Activated B cell treated with CpG ODN at 0.5 μM for 24 hours (primary cell): ENCODE measurements at regions of chr5 and their contacts with region 1.

Region 1: DNA sequence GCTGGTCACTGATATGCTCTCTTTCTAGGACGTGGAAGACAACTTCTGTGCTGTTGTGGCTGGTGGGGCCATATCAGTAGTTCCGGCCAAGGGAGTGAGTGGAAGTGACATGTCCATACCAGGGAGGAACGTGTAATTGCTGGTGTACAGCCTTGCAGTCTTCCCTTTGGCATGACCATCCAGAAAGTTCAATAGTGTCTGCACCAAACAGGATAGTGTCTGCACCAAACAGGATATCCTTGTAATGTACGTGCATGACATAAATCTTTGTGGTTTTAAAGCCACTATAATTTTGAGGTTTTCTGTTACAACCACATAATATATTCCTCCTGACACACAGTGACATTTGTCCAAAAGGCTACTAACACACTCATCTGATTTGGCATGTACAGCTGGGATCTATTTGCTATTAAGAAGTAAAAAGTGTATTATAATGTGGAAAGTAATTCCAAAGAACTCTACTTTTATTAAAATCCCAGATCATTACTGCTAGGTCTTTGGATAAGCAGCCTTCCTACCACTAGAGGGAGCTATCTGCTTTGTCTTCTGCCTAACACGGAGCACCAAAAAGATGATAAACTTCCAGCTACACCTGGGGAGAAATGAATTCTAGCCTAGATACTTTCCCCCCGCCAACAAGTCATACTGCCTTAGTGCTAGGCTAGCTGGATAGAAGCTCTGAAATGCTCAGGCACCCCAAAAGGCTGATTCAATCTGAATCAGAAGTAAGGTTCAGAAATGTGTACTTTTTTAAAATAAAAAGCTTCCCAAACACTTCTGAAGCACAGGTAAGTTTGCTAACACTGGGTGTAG is 52.7 kb downstream of the RNF145 start:
- DNase-seq: no peak
- ATAC-seq: peak; percentile 53
- H3K4me3 Mint-ChIP-seq: peak overlapping the region; percentile 50
- H3K27ac Mint-ChIP-seq: peak overlapping the region; percentile 85
- H3K4me1 Mint-ChIP-seq: peaks cover 36% of the 10 kb centered on the region
- H3K27me3 Mint-ChIP-seq: no peaks in the 10 kb centered on the region
- CTCF ChIP-seq: peak; percentile 78

Region 2: DNA sequence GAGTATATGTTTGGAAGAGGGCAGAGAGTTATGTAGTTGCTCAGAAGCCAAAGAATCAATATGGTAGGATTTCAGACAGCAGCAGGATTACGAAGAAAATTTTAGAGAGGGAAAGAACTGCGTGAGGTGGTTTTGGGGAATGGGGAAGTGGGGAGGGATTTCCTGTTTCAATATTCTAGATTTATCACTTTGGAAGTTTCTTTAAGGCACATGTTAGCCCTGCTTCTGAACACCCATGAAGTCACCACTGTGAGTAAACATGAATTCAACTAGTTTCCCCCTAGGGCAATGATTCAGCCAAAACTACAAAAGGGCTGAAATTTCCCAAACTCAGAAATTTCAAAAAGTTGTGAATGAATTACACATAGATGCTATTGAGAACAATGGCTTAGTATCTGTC is 189.1 kb before region 1 on chr5:
- CTCF ChIA-PET with region 1: no interaction called
- POLR2A ChIA-PET with region 1: no interaction called
- intact Hi-C with region 1: no loop called
- DNase-seq: no peak
- ATAC-seq: peak; percentile 29
- H3K4me3 Mint-ChIP-seq: peak overlapping the region; percentile 21
- H3K27ac Mint-ChIP-seq: peak overlapping the region; percentile 27
- H3K4me1 Mint-ChIP-seq: peaks cover 74% of the 10 kb centered on the region
- H3K27me3 Mint-ChIP-seq: no peaks in the 10 kb centered on the region
- CTCF ChIP-seq: no peak

Region 3: GRCh38 chr5:159178978-159179377 is 22.3 kb after region 1 on chr5:
- CTCF ChIA-PET with region 1: interaction called, 17 read pairs
- POLR2A ChIA-PET with region 1: interaction called, 5 read pairs
- intact Hi-C with region 1: loop called (anchors 2 kb)
- DNase-seq: no peak
- ATAC-seq: peak; percentile 74
- H3K4me3 Mint-ChIP-seq: peak overlapping the region; percentile 41
- H3K27ac Mint-ChIP-seq: peak overlapping the region; percentile 93
- H3K4me1 Mint-ChIP-seq: peaks cover 56% of the 10 kb centered on the region
- H3K27me3 Mint-ChIP-seq: no peaks in the 10 kb centered on the region
- CTCF ChIP-seq: no peak

Region 4: GRCh38 chr5:159262859-159263567 is 106.4 kb after region 1 on chr5 and contains the start of gene UBLCP1:
- CTCF ChIA-PET with region 1: interaction called, 11 read pairs
- POLR2A ChIA-PET with region 1: interaction called, 8 read pairs
- intact Hi-C with region 1: loop called (anchors 1 kb)
- DNase-seq: peak; percentile 78
- ATAC-seq: peak; percentile 83
- H3K4me3 Mint-ChIP-seq: peak within 1 kb of the TSS; percentile 99
- H3K27ac Mint-ChIP-seq: peak within 1 kb of the TSS; percentile 99
- H3K4me1 Mint-ChIP-seq: peaks cover 39% of the 10 kb centered on the region
- H3K27me3 Mint-ChIP-seq: no peaks in the 10 kb centered on the region
- CTCF ChIP-seq: no peak
- total RNA-seq, gene UBLCP1: 40.3 and 44.8 TPM in 2 replicates

Region 5: GRCh38 chr5:159316519-159317383 is 160.1 kb after region 1 on chr5:
- CTCF ChIA-PET with region 1: interaction called, 51 read pairs
- POLR2A ChIA-PET with region 1: interaction called, 3 read pairs
- intact Hi-C with region 1: loop called (anchors 1 kb)
- DNase-seq: no peak
- ATAC-seq: peak; percentile 67
- H3K4me3 Mint-ChIP-seq: no peak overlapping the region
- H3K27ac Mint-ChIP-seq: no peak overlapping the region
- H3K4me1 Mint-ChIP-seq: no peaks in the 10 kb centered on the region
- H3K27me3 Mint-ChIP-seq: peaks cover 6% of the 10 kb centered on the region
- CTCF ChIP-seq: no peak

Region 6: GRCh38 chr5:159826351-159827214 is 670.0 kb after region 1 on chr5:
- CTCF ChIA-PET with region 1: no interaction called
- POLR2A ChIA-PET with region 1: no interaction called
- intact Hi-C with region 1: no loop called
- DNase-seq: no peak
- ATAC-seq: peak; percentile 64
- H3K4me3 Mint-ChIP-seq: no peak overlapping the region
- H3K27ac Mint-ChIP-seq: no peak overlapping the region
- H3K4me1 Mint-ChIP-seq: peaks cover 15% of the 10 kb centered on the region
- H3K27me3 Mint-ChIP-seq: peaks cover 2% of the 10 kb centered on the region
- CTCF ChIP-seq: no peak

Region 7: GRCh38 chr5:159915904-159916840 is 759.5 kb after region 1 on chr5 and contains the start of gene ADRA1B:
- CTCF ChIA-PET with region 1: interaction called, 16 read pairs
- POLR2A ChIA-PET with region 1: no interaction called
- intact Hi-C with region 1: loop called (anchors 1 kb)
- DNase-seq: peak; percentile 55
- ATAC-seq: peak; percentile 96
- H3K4me3 Mint-ChIP-seq: peak within 1 kb of the TSS; percentile 57
- H3K27ac Mint-ChIP-seq: no peak within 1 kb of the TSS
- H3K4me1 Mint-ChIP-seq: peaks cover 14% of the 10 kb centered on the region
- H3K27me3 Mint-ChIP-seq: peaks cover 29% of the 10 kb centered on the region
- CTCF ChIP-seq: no peak
- total RNA-seq, gene ADRA1B: 0.49 and 0.53 TPM in 2 replicates

Region 8: GRCh38 chr5:160342403-160342941 is 1185.8 kb after region 1 on chr5:
- CTCF ChIA-PET with region 1: no interaction called
- POLR2A ChIA-PET with region 1: no interaction called
- intact Hi-C with region 1: loop called (anchors 10 kb)
- DNase-seq: no peak
- ATAC-seq: no peak
- H3K4me3 Mint-ChIP-seq: no peak overlapping the region
- H3K27ac Mint-ChIP-seq: no peak overlapping the region
- H3K4me1 Mint-ChIP-seq: no peaks in the 10 kb centered on the region
- H3K27me3 Mint-ChIP-seq: no peaks in the 10 kb centered on the region
- CTCF ChIP-seq: no peak